ENCODE measurements at regions of chr1 and their contacts with region 1.

Region 1: DNA sequence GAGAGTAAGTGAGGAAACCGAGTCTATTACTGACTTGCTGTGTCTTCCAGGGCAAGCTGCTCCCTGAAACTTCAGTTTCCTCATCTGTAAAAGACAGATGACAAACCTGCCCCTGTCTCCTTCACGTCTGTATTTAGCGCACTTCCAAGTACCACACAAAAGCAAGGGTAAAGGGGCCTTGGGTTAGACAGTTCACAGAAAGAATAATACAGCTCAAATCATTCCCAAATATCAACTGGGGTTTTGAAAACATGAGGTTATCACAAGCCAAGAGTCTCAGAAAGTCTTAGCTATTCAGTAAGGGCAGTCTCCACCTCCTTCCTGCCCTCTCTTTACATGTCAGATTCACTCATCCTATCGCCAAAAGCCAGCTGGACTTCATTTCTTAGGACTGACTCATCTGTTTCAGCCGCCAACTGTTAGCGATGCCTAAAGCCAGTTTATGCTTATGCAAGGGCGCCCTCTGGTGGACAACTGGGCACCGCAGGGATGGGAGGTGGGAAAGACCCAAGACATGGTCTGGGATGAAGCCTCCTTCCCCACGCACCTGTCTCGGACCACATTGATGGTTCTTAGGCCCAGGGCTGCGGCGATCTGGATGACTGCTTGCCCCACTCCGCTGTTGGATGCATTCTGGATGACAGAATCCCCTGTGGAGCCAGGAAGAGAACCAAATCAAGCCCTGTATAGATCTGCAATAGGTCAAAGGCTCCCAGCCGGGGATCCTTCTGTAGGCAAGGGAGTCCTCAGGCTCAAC is 21.1 kb upstream of the SRSF4 start:
- DNase-seq: peak; percentile 78
- H3K4me3 Mint-ChIP-seq: no peak overlapping the region
- H3K27ac Mint-ChIP-seq: peak overlapping the region; percentile 70
- H3K4me1 Mint-ChIP-seq: peaks cover 16% of the 10 kb centered on the region
- H3K27me3 Mint-ChIP-seq: no peaks in the 10 kb centered on the region

Region 2: GRCh38 chr1:29033829-29034466 is 168.8 kb before region 1 on chr1:
- intact Hi-C with region 1: loop called (anchors 5 kb)
- DNase-seq: no peak
- H3K4me3 Mint-ChIP-seq: no peak overlapping the region
- H3K27ac Mint-ChIP-seq: no peak overlapping the region
- H3K4me1 Mint-ChIP-seq: no peaks in the 10 kb centered on the region
- H3K27me3 Mint-ChIP-seq: no peaks in the 10 kb centered on the region

Region 3: GRCh38 chr1:29124366-29125236 is 78.2 kb before region 1 on chr1:
- intact Hi-C with region 1: loop called (anchors 5 kb)
- DNase-seq: peak; percentile 41
- H3K4me3 Mint-ChIP-seq: peak overlapping the region; percentile 75
- H3K27ac Mint-ChIP-seq: no peak overlapping the region
- H3K4me1 Mint-ChIP-seq: no peaks in the 10 kb centered on the region
- H3K27me3 Mint-ChIP-seq: peaks cover 25% of the 10 kb centered on the region

Region 4: GRCh38 chr1:29181413-29182225 is 21.1 kb before region 1 on chr1 and contains the start of gene SRSF4:
- intact Hi-C with region 1: loop called (anchors 1 kb)
- DNase-seq: peak; percentile 99
- H3K4me3 Mint-ChIP-seq: peak within 1 kb of the TSS; percentile 97
- H3K27ac Mint-ChIP-seq: peak within 1 kb of the TSS; percentile 97
- H3K4me1 Mint-ChIP-seq: peaks cover 44% of the 10 kb centered on the region
- H3K27me3 Mint-ChIP-seq: no peaks in the 10 kb centered on the region
- total RNA-seq, gene SRSF4: 145 TPM in 2 replicates